ENCODE measurements at regions of chr2 and their contacts with region 1.

Region 1: DNA sequence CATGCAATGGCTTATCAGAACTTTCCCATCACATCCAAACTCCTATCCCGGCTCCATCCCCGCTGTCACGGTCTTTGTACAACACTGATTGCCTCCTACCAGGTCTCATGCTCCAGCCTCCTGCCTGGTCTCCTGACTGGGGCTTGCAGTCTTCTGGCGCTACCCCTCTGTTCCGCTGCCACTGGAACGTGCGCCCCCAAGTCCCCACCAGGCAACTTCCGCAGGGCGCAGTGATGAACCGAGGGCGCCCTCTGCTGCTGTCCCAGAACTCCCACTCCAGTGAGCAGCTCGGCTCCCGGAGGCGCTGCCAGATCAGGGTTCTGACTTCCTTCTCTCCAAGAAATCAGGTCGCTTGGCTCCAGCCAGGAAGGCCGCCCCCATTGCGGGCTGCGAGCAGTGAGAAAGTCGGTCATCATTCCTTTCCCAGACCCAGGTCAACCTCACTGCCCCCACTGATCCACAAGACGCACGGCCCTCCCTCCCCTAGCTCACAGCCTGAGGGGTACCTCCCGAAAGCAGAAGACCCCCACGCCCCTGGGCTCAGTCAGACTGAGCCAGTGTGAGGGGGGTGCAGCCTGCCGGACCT is 43.9 kb upstream of the RAB11FIP5 start:
- DNase-seq: peak; percentile 56
- H3K4me3 ChIP-seq: no peak overlapping the region
- H3K27ac ChIP-seq: no peak overlapping the region
- H3K4me1 ChIP-seq: peaks cover 0 to 6% (median 3%) of the 10 kb centered on the region in 4 donors
- H3K27me3 ChIP-seq: peaks cover 26% of the 10 kb centered on the region
- CTCF ChIP-seq: peak; percentile 49 to 66 (median 52)
- EP300 ChIP-seq: no peak
- POLR2A ChIP-seq: no peak

Region 2: GRCh38 chr2:72993147-72993932 is 163.3 kb before region 1 on chr2:
- in situ Hi-C with region 1: loop called in 1 of 4 experiments (anchors 10 kb)
- intact Hi-C with region 1: loop called (anchors 5 kb)
- DNase-seq: no peak
- H3K4me3 ChIP-seq: no peak overlapping the region
- H3K27ac ChIP-seq: no peak overlapping the region
- H3K4me1 ChIP-seq: no peaks in the 10 kb centered on the region
- H3K27me3 ChIP-seq: no peaks in the 10 kb centered on the region
- CTCF ChIP-seq: peak; percentile 81 to 88 (median 86)
- EP300 ChIP-seq: no peak
- POLR2A ChIP-seq: no peak

Region 3: DNA sequence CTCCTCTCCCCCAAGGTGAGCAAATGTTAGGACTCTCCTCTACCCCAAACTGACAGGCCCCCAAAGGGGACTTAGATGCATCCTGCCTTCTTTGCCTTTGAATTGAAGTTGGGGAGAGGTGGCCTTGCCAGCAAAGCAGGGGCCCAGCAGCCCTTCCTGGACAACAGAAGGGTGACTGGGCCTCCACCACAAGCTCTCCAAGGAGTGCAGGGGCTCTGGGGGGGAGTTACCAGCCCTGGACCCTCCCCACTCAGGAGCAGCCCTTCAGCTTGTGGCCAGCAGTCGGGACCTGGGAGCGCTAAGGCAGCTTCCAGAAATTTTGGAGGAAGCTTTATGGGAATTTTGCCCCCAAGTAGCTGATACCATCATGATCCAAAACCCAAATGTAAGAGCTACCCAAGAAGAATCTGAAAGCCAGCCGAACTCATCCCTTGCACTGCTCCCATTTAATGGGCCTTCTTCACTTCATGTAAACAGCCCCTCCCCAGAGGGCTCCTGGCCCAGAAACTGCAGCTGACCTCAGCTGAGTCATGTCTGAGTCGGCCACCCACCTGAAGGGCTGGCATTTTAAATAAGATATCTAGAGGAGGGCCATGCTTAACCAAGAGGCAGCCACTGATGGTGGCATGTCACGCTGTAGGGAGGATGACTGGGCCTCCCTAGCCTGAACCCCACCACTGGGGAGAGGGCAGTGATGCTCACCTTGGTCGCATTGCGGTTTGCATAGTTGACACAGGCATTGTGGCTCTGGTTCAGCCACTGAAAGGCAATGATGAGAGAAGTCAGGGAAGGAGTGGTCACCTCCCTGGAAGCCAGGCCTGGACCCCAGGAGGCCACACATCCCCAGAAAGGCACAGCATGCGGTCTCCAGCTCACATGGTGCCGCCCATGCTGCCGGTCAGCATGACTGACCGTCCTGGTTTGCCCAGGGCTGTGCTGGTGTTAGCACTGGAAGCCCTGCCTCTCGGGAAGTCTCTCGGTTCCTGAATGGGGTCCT is 156.6 kb before region 1 on chr2:
- in situ Hi-C with region 1: loop called in 1 of 4 experiments (anchors 10 kb)
- intact Hi-C with region 1: no loop called
- DNase-seq: no peak
- H3K4me3 ChIP-seq: no peak overlapping the region
- H3K27ac ChIP-seq: no peak overlapping the region
- H3K4me1 ChIP-seq: no peaks in the 10 kb centered on the region
- H3K27me3 ChIP-seq: no peaks in the 10 kb centered on the region
- CTCF ChIP-seq: no peak
- EP300 ChIP-seq: no peak
- POLR2A ChIP-seq: no peak

Region 4: GRCh38 chr2:73085691-73086360 is 70.8 kb before region 1 on chr2:
- in situ Hi-C with region 1: loop called in 3 of 4 experiments (anchors 5 kb)
- intact Hi-C with region 1: loop called (anchors 2 kb)
- DNase-seq: peak; percentile 88
- H3K4me3 ChIP-seq: no peak overlapping the region
- H3K27ac ChIP-seq: no peak overlapping the region
- H3K4me1 ChIP-seq: peaks cover 0 to 4% (median 4%) of the 10 kb centered on the region in 4 donors
- H3K27me3 ChIP-seq: no peaks in the 10 kb centered on the region
- CTCF ChIP-seq: peak; percentile 85 to 92 (median 90)
- EP300 ChIP-seq: no peak
- POLR2A ChIP-seq: no peak

Region 5: DNA sequence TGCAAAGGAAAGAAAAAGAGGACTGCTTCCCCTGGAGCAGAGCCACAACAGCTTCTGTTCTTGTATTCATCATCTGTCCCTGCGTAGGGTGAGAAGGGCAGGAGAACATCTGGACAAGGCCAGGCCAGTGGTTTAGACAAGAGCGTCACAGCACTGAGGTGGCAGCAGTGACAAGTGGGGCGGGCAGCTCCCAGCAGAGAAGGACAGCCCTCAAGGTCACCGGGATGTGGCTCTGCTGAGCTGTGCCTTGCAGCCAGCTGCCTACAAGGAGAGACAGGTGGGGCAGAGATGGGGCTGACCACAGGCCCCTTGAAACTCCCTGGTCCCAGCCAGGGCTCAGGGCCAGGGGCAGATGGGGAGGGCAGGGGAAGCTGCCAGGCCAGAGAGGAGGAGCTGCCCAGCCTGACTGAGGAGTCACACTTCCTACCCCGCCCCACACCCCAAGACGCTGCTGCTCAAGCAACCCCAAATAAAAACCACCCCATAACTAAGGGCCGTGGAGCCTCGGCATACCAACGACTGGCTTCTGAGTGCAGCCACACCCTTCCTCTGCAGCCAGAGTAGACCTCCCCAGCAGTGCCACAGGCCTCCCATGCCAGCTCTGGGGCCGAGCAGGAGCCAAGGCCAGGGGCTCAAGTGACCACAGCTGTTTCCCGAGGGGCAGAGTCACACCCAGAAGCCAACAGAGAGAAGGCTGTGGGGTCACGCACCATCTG is 49.3 kb before region 1 on chr2:
- in situ Hi-C with region 1: loop called in 1 of 4 experiments (anchors 10 kb)
- intact Hi-C with region 1: no loop called
- DNase-seq: peak; percentile 41
- H3K4me3 ChIP-seq: no peak overlapping the region
- H3K27ac ChIP-seq: peak overlapping the region in 1 of 4 donors; percentile 43
- H3K4me1 ChIP-seq: peaks cover 11 to 42% (median 26%) of the 10 kb centered on the region in 4 donors
- H3K27me3 ChIP-seq: no peaks in the 10 kb centered on the region
- CTCF ChIP-seq: no peak
- EP300 ChIP-seq: no peak
- POLR2A ChIP-seq: no peak